CD4-positive, alpha-beta memory T cell (primary cell): ENCODE measurements at regions of chr6 and their contacts with region 1.

Region 1: GRCh38 chr6:134123666-134124208 is 71.3 kb upstream of the SLC2A12 start:
- DNase-seq: peak in 4 of 5 donors; percentile 19 to 72 (median 62)
- H3K4me3 ChIP-seq: no peak overlapping the region
- H3K4me3 Mint-ChIP-seq: peak overlapping the region in 3 of 8 donors; percentile 59 to 77 (median 60)
- H3K27ac ChIP-seq: no peak overlapping the region
- H3K27ac Mint-ChIP-seq: peak overlapping the region in 3 of 7 donors; percentile 13 to 74 (median 66)
- H3K4me1 ChIP-seq: no peaks in the 10 kb centered on the region
- H3K4me1 Mint-ChIP-seq: peaks cover 0 to 3% (median 3%) of the 10 kb centered on the region in 4 donors
- H3K27me3 ChIP-seq: no peaks in the 10 kb centered on the region
- H3K27me3 Mint-ChIP-seq: peaks cover 0 to 1% of the 10 kb centered on the region in 2 donors

Region 2: GRCh38 chr6:134105924-134106323 is 17.8 kb before region 1 on chr6:
- CTCF ChIA-PET with region 1: interaction called, 63 read pairs
- POLR2A ChIA-PET with region 1: no interaction called
- intact Hi-C with region 1: no loop called
- DNase-seq: no peak
- H3K4me3 ChIP-seq: no peak overlapping the region
- H3K4me3 Mint-ChIP-seq: no peak overlapping the region
- H3K27ac ChIP-seq: no peak overlapping the region
- H3K27ac Mint-ChIP-seq: no peak overlapping the region
- H3K4me1 ChIP-seq: no peaks in the 10 kb centered on the region
- H3K4me1 Mint-ChIP-seq: no peaks in the 10 kb centered on the region
- H3K27me3 ChIP-seq: no peaks in the 10 kb centered on the region
- H3K27me3 Mint-ChIP-seq: peaks cover 3 to 9% of the 10 kb centered on the region in 2 donors

Region 3: DNA sequence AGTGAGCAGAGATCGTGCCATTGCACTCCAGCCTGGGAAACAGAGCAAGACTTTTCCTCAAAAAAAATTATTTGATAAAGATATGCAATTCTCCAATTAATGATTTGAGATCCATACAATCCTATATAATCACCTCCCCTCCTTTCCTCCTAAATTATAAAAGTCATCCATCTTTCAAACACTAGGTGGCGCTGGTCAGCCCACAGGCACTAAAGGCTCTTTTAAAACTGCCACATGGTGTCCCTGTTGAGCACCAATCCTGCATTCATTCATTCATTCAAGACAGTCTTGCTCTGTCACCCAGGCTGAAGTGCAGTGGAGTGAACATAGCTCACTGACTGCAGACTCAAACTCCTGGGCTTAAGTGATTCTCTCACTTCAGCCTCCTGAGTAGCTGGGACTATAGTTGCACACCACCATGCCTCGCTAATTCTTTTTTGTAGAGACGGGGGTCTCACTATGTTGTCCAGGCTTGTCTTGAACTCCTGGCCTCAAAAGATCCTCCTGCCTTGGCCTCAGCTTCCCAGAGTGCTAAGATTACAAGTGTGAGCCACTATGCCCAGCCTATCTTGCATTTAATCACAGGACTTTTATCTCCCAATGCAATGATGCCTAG is 12.6 kb before region 1 on chr6:
- CTCF ChIA-PET with region 1: interaction called, 63 read pairs
- POLR2A ChIA-PET with region 1: no interaction called
- intact Hi-C with region 1: no loop called
- DNase-seq: peak; percentile 43 to 67 (median 57)
- H3K4me3 ChIP-seq: no peak overlapping the region
- H3K4me3 Mint-ChIP-seq: no peak overlapping the region
- H3K27ac ChIP-seq: no peak overlapping the region
- H3K27ac Mint-ChIP-seq: no peak overlapping the region
- H3K4me1 ChIP-seq: no peaks in the 10 kb centered on the region
- H3K4me1 Mint-ChIP-seq: peaks cover 0 to 5% (median 0%) of the 10 kb centered on the region in 4 donors
- H3K27me3 ChIP-seq: no peaks in the 10 kb centered on the region
- H3K27me3 Mint-ChIP-seq: peaks cover 4 to 20% of the 10 kb centered on the region in 2 donors

Region 4: DNA sequence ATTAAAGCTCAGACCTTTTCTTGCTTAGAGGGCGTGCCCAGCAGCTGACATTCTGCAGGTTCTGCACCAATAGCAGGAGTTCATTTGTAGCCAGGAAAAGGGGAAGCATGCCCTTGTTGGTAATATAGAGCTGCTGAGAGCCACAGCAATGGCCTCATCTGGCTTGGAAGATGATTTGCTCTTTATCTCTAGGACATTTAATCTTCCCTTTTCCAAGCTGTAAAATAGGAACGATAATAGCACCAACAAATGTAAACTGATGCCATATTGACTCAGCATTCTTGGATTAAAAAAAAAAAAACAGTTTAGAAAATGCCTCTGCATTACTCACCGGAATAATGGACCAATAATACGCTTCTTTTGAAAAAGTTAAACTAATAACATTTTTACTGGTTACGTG is 22.0 kb after region 1 on chr6:
- CTCF ChIA-PET with region 1: interaction called, 10 read pairs
- POLR2A ChIA-PET with region 1: no interaction called
- intact Hi-C with region 1: no loop called
- DNase-seq: no peak
- H3K4me3 ChIP-seq: no peak overlapping the region
- H3K4me3 Mint-ChIP-seq: no peak overlapping the region
- H3K27ac ChIP-seq: no peak overlapping the region
- H3K27ac Mint-ChIP-seq: no peak overlapping the region
- H3K4me1 ChIP-seq: no peaks in the 10 kb centered on the region
- H3K4me1 Mint-ChIP-seq: no peaks in the 10 kb centered on the region
- H3K27me3 ChIP-seq: no peaks in the 10 kb centered on the region
- H3K27me3 Mint-ChIP-seq: peaks cover 0 to 4% of the 10 kb centered on the region in 2 donors

Region 5: DNA sequence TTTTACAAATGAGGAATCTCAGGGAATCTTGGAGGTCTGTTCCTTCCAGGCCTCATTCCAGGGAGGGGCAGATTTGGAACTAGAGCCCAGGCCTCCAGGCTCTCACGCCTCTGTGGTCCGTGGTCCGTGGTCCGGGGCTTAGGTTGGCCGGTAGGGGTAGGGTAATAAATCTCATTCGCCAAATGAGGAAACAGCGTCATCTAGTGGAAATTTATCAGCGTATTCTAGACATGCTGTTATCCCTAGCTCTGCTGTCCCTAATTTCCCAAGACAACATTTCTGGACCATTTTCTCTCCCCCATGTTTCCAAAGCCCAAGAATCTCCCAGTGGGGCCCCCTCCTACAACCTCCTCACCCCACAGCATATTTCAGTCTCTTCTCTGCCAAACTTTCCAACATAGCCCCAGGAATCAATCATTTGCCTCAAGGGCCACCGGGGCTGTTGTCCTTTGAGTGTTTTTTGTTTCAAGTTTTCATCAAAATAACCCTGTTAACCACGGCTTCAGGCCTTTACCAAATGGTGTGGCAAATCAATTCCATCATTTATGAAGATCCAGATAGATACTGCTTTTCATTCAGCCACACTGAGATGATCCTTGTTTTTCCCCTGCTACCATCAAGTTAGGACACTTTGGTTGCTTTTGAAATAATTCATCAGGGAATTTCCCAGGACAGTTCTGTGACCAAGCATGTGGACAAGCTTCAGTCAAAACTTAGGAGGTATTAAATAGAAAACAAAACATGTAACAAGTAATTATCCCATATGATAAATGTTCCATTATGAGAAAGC is 699.4 kb after region 1 on chr6:
- CTCF ChIA-PET with region 1: interaction called, 12 read pairs
- POLR2A ChIA-PET with region 1: no interaction called
- intact Hi-C with region 1: loop called (anchors 1 kb)
- DNase-seq: peak in 4 of 5 donors; percentile 46 to 54 (median 51)
- H3K4me3 ChIP-seq: no peak overlapping the region
- H3K4me3 Mint-ChIP-seq: no peak overlapping the region
- H3K27ac ChIP-seq: no peak overlapping the region
- H3K27ac Mint-ChIP-seq: no peak overlapping the region
- H3K4me1 ChIP-seq: no peaks in the 10 kb centered on the region
- H3K4me1 Mint-ChIP-seq: peaks cover 0 to 3% (median 0%) of the 10 kb centered on the region in 4 donors
- H3K27me3 ChIP-seq: no peaks in the 10 kb centered on the region
- H3K27me3 Mint-ChIP-seq: peaks cover 3 to 7% of the 10 kb centered on the region in 2 donors

Region 6: DNA sequence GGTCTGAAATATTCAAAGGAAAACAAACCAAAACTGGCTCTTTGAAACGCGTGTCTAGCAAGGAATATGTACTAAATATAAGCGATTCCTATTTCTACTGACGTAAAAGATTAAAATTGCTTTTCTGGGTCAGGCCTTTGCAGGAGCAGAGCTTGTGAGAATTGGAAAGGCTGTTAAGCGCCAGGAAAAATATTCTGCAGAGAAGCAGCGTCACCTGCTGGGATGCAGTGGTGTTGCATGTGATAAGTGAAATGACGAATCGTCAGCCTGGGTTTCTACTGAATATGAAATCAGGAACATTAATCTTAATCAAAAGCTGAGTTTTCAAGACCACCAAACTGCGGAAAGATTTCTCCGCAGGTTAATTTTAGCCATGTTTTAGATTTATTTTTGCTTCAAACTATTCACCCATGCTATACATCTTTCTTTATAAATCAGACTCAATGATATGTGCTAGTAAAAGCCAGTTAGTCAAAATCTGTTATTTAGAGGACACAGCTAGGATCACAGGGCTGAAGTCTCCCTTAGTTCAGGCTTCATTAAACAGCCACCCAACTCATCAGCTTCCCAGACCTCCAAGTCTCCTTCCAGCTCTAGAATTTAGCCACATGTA is 758.8 kb after region 1 on chr6:
- CTCF ChIA-PET with region 1: interaction called, 6 read pairs
- POLR2A ChIA-PET with region 1: no interaction called
- intact Hi-C with region 1: loop called (anchors 1 kb)
- DNase-seq: peak; percentile 22 to 49 (median 45)
- H3K4me3 ChIP-seq: no peak overlapping the region
- H3K4me3 Mint-ChIP-seq: no peak overlapping the region
- H3K27ac ChIP-seq: no peak overlapping the region
- H3K27ac Mint-ChIP-seq: no peak overlapping the region
- H3K4me1 ChIP-seq: no peaks in the 10 kb centered on the region
- H3K4me1 Mint-ChIP-seq: no peaks in the 10 kb centered on the region
- H3K27me3 ChIP-seq: no peaks in the 10 kb centered on the region
- H3K27me3 Mint-ChIP-seq: peaks cover 14 to 18% of the 10 kb centered on the region in 2 donors